ENCODE measurements at regions of chr17 and their contacts with region 1.

Region 1: GRCh38 chr17:50630524-50631194 is 4.0 kb upstream of the ABCC3 start:
- DNase-seq: peak; percentile 60 to 80
- H3K4me3 ChIP-seq: no peak overlapping the region
- H3K27ac ChIP-seq: no peak overlapping the region
- H3K4me1 ChIP-seq: peaks cover 0 to 3% of the 10 kb centered on the region in 2 donors
- H3K27me3 ChIP-seq: no peaks in the 10 kb centered on the region
- CTCF ChIP-seq: peak; percentile 82 to 97 (median 86)
- POLR2A ChIP-seq: no peak

Region 2: DNA sequence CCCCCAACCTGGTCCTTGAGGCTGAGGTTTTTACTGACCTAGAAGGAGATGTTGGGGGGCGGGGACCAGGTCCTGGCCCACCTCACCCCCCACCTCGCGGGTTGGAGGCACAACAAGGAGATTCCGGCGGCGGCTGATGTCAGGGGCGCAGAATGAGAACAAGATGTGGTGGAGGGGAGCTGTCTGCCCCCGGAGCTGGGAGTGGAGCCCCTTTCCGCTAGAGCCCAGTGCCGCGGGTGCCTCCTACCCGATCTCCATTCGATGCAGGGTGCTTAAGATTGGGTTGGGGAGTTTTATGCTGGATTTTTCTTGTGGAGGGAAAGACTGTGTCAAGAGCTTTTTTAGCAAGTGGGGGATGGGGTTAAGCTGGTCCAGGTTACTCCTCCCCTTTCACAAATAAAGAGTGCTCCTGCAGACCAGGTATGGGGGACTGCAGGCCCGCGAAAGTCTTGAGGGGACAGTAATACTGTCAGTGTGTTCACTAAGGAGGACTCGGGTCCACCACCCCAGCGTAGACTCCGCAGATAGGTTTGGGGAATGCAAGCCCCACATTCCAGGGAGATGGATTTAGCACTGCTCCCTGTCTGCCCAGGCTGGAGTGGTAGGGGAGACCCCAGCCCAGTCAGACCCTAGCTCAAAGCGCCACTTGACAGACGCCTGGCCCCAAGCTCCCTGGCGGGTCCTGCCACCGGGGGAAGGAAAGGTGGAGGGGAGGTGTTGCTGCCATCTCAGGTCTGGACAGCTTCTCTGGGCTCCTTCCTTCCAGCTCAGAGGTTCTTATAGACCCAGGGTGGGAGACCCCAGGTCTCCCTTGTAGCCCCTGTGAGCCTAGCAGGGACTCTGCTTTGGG is 68.2 kb before region 1 on chr17:
- intact Hi-C with region 1: loop called (anchors 2 kb)
- DNase-seq: no peak
- H3K4me3 ChIP-seq: peak overlapping the region in 2 of 3 donors; percentile 68 to 76
- H3K27ac ChIP-seq: peak overlapping the region in 1 of 2 donors; percentile 92
- H3K4me1 ChIP-seq: peaks cover 0 to 9% of the 10 kb centered on the region in 2 donors
- H3K27me3 ChIP-seq: peaks cover 3 to 45% of the 10 kb centered on the region in 2 donors
- CTCF ChIP-seq: no peak
- POLR2A ChIP-seq: no peak

Region 3: GRCh38 chr17:50596191-50597037 is 34.2 kb before region 1 on chr17:
- intact Hi-C with region 1: no loop called
- DNase-seq: no peak
- H3K4me3 ChIP-seq: no peak overlapping the region
- H3K27ac ChIP-seq: no peak overlapping the region
- H3K4me1 ChIP-seq: no peaks in the 10 kb centered on the region
- H3K27me3 ChIP-seq: no peaks in the 10 kb centered on the region
- CTCF ChIP-seq: no peak
- POLR2A ChIP-seq: no peak

Region 4: GRCh38 chr17:50657627-50658026 is 27.0 kb after region 1 on chr17:
- intact Hi-C with region 1: loop called (anchors 1 kb)
- DNase-seq: no peak
- H3K4me3 ChIP-seq: no peak overlapping the region
- H3K27ac ChIP-seq: no peak overlapping the region
- H3K4me1 ChIP-seq: peaks cover 10 to 20% of the 10 kb centered on the region in 2 donors
- H3K27me3 ChIP-seq: no peaks in the 10 kb centered on the region
- CTCF ChIP-seq: no peak
- POLR2A ChIP-seq: no peak

Region 5: GRCh38 chr17:50681263-50682210 is 50.9 kb after region 1 on chr17:
- intact Hi-C with region 1: loop called (anchors 10 kb)
- DNase-seq: peak in 1 of 2 donors; percentile 52
- H3K4me3 ChIP-seq: no peak overlapping the region
- H3K27ac ChIP-seq: no peak overlapping the region
- H3K4me1 ChIP-seq: peaks cover 0 to 4% of the 10 kb centered on the region in 2 donors
- H3K27me3 ChIP-seq: no peaks in the 10 kb centered on the region
- CTCF ChIP-seq: peak; percentile 12 to 76 (median 60)
- POLR2A ChIP-seq: no peak

Region 6: GRCh38 chr17:50707289-50708049 is 76.8 kb after region 1 on chr17 and contains the start of gene ANKRD40:
- intact Hi-C with region 1: loop called (anchors 2 kb)
- DNase-seq: peak; percentile 86 to 90
- H3K4me3 ChIP-seq: peak within 1 kb of the TSS; percentile 60 to 75 (median 74)
- H3K27ac ChIP-seq: peak within 1 kb of the TSS; percentile 92 to 98
- H3K4me1 ChIP-seq: peaks cover 7 to 17% of the 10 kb centered on the region in 2 donors
- H3K27me3 ChIP-seq: no peaks in the 10 kb centered on the region
- CTCF ChIP-seq: no peak
- POLR2A ChIP-seq: peak; percentile 30
- total RNA-seq, gene ANKRD40: 36.7 to 68.6 (median 38.1) TPM

Region 7: DNA sequence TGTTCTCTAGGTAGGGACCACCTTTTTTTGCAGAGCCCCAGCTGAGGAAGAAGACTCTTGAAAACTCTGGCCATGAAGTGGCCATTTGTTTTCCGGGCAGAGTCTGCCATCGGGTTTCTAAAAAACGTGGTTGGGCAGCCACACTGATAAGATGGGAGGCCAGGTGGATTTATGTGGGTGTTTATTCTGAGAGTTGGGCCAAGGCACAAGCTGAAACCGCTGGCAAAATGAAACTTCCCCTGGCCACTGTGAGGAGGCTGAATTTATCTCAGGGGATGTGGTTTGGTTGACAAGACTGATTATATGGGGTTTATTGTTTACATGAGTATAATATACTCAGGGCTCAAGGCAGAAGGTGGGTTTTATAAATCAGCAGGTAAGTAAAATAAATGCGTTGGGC is 1051.5 kb after region 1 on chr17:
- intact Hi-C with region 1: no loop called
- DNase-seq: no peak
- H3K4me3 ChIP-seq: no peak overlapping the region
- H3K27ac ChIP-seq: no peak overlapping the region
- H3K4me1 ChIP-seq: no peaks in the 10 kb centered on the region
- H3K27me3 ChIP-seq: no peaks in the 10 kb centered on the region
- CTCF ChIP-seq: no peak
- POLR2A ChIP-seq: no peak